A673 (cell line): ENCODE measurements at regions of chr9 and their contacts with region 1.

Region 1: GRCh38 chr9:38445154-38446043 is 21.1 kb upstream of the IGFBPL1 start:
- DNase-seq: no peak
- H3K4me3 ChIP-seq: no peak overlapping the region
- H3K27ac ChIP-seq: no peak overlapping the region
- H3K4me1 ChIP-seq: no peaks in the 10 kb centered on the region
- H3K27me3 ChIP-seq: peaks cover 20% of the 10 kb centered on the region
- CTCF ChIP-seq: no peak

Region 2: DNA sequence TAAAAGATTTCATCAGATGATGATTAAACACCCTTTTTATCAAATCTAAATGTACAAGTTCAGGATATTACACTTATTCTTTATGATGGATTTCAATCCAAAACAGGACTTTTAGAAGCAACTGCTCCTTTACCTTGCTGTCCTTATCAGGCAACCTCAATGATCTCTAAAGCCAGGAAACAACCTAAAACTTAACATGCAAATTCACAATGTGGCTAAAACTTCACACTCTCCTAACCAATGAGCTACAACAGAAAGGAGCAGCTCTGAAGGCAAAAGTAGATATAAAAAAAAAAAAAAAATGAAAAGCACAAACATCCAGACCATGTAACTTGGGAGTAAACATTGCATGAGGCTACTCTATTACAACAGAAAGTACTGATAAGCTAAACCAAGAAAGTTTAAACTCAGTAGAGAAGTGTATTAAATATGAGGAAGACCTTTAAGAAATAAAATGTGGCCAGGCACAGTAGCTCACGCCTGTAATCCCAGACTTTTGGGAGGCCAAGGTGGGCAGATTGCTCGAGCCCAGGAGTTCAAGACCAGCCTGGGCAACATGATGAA is 564.4 kb before region 1 on chr9:
- CTCF ChIA-PET with region 1: no interaction called
- POLR2A ChIA-PET with region 1: interaction called, 11 read pairs
- intact Hi-C with region 1: no loop called
- DNase-seq: no peak
- H3K4me3 ChIP-seq: no peak overlapping the region
- H3K27ac ChIP-seq: no peak overlapping the region
- H3K4me1 ChIP-seq: no peaks in the 10 kb centered on the region
- H3K27me3 ChIP-seq: no peaks in the 10 kb centered on the region
- CTCF ChIP-seq: no peak